A673 (cell line): ENCODE measurements at regions of chr6 and their contacts with region 1.

Region 1: GRCh38 chr6:44237813-44238433 is 9.0 kb upstream of the HSP90AB1 start:
- DNase-seq: peak; percentile 77
- H3K4me3 ChIP-seq: peak overlapping the region; percentile 62
- H3K27ac ChIP-seq: peak overlapping the region; percentile 55
- H3K4me1 ChIP-seq: peaks cover 10% of the 10 kb centered on the region
- H3K27me3 ChIP-seq: no peaks in the 10 kb centered on the region
- CTCF ChIP-seq: peak; percentile 98

Region 2: GRCh38 chr6:43516697-43517504 is 721.0 kb before region 1 on chr6 and contains the starts of genes POLR1C and YIPF3:
- CTCF ChIA-PET with region 1: no interaction called
- POLR2A ChIA-PET with region 1: no interaction called
- intact Hi-C with region 1: no loop called
- DNase-seq: peak; percentile 99
- H3K4me3 ChIP-seq: peak within 1 kb of the TSS; percentile 89
- H3K27ac ChIP-seq: peak within 1 kb of the TSS; percentile 88
- H3K4me1 ChIP-seq: peaks cover 12% of the 10 kb centered on the region
- H3K27me3 ChIP-seq: no peaks in the 10 kb centered on the region
- CTCF ChIP-seq: no peak
- total RNA-seq, gene POLR1C: 64.1 and 75.4 TPM in 2 replicates
- total RNA-seq, gene YIPF3: 75.1 and 84.2 TPM in 2 replicates

Region 3: DNA sequence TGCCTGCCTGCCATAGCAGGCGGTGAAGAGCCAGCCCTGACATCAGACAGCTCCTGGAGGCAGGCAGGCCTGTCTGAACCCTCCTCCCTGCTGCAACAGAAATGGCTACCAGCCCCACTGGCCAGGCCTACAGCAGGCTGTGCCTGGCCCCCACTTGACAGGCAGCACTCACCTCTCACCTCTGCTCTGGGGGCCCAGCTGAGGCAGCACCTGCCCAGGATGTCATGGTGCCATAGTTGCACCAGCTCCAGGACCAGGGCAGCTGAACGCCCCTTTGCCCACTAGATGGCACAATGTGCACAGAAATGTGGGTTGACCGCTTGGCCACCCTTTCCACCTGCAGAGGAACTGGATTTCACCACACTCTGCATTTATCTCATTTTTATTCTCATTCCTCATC is 141.3 kb before region 1 on chr6:
- CTCF ChIA-PET with region 1: interaction called, 3 read pairs
- POLR2A ChIA-PET with region 1: no interaction called
- intact Hi-C with region 1: loop called (anchors 2 kb)
- DNase-seq: peak; percentile 58
- H3K4me3 ChIP-seq: no peak overlapping the region
- H3K27ac ChIP-seq: no peak overlapping the region
- H3K4me1 ChIP-seq: no peaks in the 10 kb centered on the region
- H3K27me3 ChIP-seq: no peaks in the 10 kb centered on the region
- CTCF ChIP-seq: peak; percentile 71

Region 4: GRCh38 chr6:44172731-44173500 is 65.0 kb before region 1 on chr6:
- CTCF ChIA-PET with region 1: interaction called, 4 read pairs
- POLR2A ChIA-PET with region 1: no interaction called
- intact Hi-C with region 1: loop called (anchors 1 kb)
- DNase-seq: peak; percentile 85
- H3K4me3 ChIP-seq: no peak overlapping the region
- H3K27ac ChIP-seq: no peak overlapping the region
- H3K4me1 ChIP-seq: no peaks in the 10 kb centered on the region
- H3K27me3 ChIP-seq: no peaks in the 10 kb centered on the region
- CTCF ChIP-seq: peak; percentile 97

Region 5: GRCh38 chr6:44226368-44227146 is 11.4 kb before region 1 on chr6:
- CTCF ChIA-PET with region 1: interaction called, 11 read pairs
- POLR2A ChIA-PET with region 1: no interaction called
- intact Hi-C with region 1: no loop called
- DNase-seq: no peak
- H3K4me3 ChIP-seq: no peak overlapping the region
- H3K27ac ChIP-seq: peak overlapping the region; percentile 36
- H3K4me1 ChIP-seq: peaks cover 35% of the 10 kb centered on the region
- H3K27me3 ChIP-seq: no peaks in the 10 kb centered on the region
- CTCF ChIP-seq: no peak